ENCODE measurements at regions of chr17 and their contacts with region 1.

Region 1: DNA sequence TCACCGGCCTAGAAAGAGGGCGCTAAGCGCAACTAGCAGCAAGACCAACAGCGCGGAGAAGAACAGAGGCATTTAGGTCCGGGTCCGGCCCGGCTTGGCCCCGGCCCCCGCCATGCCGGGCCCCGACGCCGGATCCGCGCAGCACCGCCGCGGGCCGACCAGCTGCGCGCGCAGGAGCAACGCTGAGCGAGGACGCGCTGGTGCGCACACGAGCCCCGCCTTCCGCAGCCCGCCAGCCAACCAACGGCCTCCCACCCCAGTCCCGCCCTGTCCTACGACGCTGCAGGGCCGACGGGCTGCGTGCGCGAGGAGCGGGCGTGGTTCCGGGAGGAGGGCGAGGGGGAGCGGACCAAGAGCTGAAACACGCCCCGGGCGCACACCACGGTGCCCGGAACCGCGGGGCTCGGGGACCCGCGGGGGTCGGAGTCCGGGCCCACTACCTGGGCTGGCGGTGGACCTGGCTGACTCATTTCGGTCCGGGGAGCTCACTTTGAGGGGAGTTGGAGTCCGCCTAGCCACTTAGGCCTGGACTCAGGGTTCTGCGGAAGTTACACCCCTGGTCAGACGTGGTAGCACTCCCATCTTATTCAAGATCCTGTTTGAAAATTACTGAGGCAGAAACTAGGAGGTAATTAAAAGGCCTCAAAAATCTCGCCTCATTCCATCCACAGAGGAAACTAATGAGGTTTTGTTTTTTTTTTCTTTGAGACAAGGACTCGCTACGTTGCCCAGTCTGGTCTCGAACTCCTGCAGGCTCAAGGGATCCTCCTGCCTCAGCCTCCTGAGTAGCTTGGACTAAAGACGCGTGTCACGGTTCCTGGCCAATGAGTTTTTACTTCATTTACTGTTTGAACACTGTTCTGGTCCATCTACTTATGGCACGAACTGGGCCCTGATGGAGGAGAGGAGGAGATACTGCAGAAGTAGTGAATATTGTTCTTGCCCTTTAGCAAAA is at the start of gene BLTP2:
- DNase-seq: peak; percentile 85 to 93
- H3K4me3 ChIP-seq: peak within 1 kb of the TSS; percentile 91
- H3K27ac ChIP-seq: peak within 1 kb of the TSS; percentile 31; the same call in 1 of the 2 replicates
- H3K4me1 ChIP-seq: peaks cover 17% of the 10 kb centered on the region
- H3K27me3 ChIP-seq: no peaks in the 10 kb centered on the region
- CTCF ChIP-seq: no peak
- total RNA-seq, gene BLTP2: 161 and 204 TPM in 2 replicates

Region 2: DNA sequence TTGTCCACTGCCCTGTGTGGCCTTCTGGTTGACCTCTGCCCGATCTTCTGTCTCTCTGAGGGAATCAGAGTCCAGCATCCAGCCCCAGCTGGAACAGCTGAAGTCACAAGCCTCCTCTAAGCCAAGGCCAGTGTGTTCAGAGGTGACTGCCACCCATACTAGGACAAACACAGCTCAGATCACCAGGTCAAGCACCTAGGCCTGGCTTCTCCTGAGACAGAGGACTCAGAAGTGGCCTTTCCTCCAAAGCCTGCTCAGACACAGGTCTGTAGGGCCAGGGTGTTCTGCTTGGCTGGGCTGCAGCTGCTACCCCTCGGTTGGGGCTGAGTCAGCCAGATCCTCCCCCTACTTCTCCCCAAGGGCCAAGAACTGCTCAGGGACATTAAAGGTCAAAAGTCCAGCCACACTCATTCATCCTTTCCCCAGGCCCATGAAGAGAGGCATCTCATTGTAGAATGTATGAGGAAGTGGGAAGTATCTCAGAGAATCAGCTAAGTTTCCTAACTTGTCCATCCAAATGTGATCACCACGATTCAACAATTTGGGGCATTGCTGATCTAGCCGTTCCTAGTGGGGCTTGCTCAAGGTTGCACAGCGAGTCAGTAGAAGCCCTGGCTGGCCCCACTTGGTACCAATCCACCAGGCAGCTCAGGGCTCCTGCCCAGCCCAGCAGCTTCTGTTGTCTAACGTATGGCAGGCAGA is 246.8 kb before region 1 on chr17:
- CTCF ChIA-PET with region 1: no interaction called
- POLR2A ChIA-PET with region 1: no interaction called
- intact Hi-C with region 1: no loop called
- DNase-seq: no peak
- H3K4me3 ChIP-seq: no peak overlapping the region
- H3K27ac ChIP-seq: no peak overlapping the region
- H3K4me1 ChIP-seq: no peaks in the 10 kb centered on the region
- H3K27me3 ChIP-seq: no peaks in the 10 kb centered on the region
- CTCF ChIP-seq: no peak

Region 3: DNA sequence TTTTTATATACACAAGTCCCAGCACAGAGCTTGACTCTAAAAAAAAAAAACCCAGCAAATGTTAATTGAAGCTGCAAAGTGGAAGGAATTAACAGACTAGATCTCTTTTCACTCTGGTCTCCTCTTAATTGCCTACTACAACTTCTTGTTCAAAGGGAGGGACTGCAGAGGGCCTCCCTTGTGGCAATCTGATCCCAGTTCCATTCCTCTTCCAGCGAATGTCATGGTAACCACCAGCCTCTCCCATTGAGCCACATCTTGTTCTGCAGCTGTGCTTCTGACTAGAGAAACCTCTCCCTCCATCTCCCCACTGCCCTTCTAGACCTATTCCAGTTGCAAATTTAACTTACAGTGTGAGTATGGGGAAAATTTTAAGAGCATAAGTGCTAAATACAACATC is 22.6 kb after region 1 on chr17:
- CTCF ChIA-PET with region 1: no interaction called
- POLR2A ChIA-PET with region 1: interaction called, 12 read pairs
- intact Hi-C with region 1: loop called (anchors 2 kb)
- DNase-seq: no peak
- H3K4me3 ChIP-seq: no peak overlapping the region
- H3K27ac ChIP-seq: no peak overlapping the region
- H3K4me1 ChIP-seq: peaks cover 7% of the 10 kb centered on the region
- H3K27me3 ChIP-seq: no peaks in the 10 kb centered on the region
- CTCF ChIP-seq: no peak

Region 4: DNA sequence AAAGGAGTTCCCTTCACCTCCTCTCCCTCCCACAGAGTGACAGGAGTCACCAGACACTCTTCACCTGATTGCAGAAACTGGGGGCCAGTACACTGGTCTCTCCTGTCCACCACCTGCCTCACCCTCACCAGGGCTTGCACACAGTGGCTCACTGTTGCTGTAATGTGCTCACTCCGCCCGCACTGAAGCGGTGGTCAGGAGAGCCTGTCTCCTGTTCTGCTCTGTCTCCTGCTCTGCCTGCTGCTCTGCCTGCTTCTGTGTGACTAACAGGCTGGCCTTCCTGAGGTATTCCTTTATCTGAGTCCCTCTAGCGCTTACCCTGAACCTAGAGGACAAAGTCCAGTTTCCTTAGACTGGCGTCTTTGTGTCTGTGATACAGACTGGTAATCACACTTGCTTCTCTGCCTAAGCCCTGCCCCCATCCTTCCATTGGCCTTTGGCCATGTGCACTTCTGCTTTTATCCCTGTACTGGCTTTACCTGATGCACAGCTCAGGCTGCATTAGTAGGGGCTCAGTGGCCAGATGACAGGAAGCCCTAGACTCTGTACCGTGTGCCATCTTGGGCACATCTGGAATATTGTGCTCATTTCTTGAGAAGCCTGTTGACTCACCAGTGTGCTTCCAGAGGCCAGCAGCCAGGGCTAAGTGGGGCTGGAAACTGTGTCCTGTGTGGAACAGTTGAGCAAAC is 53.1 kb after region 1 on chr17:
- CTCF ChIA-PET with region 1: no interaction called
- POLR2A ChIA-PET with region 1: no interaction called
- intact Hi-C with region 1: no loop called
- DNase-seq: no peak
- H3K4me3 ChIP-seq: no peak overlapping the region
- H3K27ac ChIP-seq: no peak overlapping the region
- H3K4me1 ChIP-seq: no peaks in the 10 kb centered on the region
- H3K27me3 ChIP-seq: no peaks in the 10 kb centered on the region
- CTCF ChIP-seq: no peak

Region 5: DNA sequence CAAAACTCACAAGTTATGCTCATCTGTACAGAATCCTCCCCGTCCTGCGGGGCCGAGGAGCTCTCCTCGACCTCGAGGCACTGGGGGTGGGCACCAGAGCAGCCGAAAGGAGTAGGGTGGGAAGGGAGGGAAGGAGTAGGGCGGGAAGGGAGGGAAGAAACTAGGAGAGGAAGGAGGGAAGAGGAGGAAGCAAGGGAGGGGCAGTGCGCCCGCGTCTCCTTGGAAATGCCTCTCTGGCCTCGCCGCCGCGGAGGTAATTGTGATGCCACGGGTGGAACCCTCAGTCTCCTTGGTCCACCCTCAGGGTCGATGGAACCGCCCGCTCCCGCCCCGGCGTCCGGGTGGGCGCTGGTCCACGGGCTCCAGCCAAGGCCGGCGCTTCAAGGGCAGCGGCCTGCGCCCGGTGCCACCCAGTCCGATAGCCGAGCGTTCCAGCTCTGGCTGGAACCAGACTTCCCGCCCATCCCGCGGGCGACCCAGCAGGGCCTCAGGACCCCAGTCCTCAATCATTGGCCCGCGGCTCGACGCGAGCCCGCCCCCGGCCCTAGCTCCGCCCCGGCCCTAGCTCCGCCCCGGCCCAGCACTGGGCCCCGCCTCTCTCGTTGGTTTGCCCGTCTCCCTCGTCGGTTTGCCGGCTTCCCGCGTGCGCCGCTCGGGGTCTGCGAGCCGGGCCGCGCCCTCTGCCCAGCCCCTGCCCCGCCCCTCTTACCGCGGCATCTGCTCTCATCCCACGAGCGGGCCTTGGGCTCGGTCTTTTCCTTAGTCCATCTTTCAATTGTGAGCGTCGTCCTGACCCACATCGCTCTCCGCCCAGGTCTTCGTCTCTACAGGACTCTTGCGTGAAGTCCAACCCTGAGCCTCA is 65.8 kb after region 1 on chr17:
- CTCF ChIA-PET with region 1: interaction called, 7 read pairs
- POLR2A ChIA-PET with region 1: interaction called, 18 read pairs
- intact Hi-C with region 1: no loop called
- DNase-seq: peak; percentile 66 to 95
- H3K4me3 ChIP-seq: peak overlapping the region; percentile 82
- H3K27ac ChIP-seq: peak overlapping the region; percentile 17; the same call in 1 of the 2 replicates
- H3K4me1 ChIP-seq: peaks cover 14% of the 10 kb centered on the region
- H3K27me3 ChIP-seq: no peaks in the 10 kb centered on the region
- CTCF ChIP-seq: no peak

Region 6: DNA sequence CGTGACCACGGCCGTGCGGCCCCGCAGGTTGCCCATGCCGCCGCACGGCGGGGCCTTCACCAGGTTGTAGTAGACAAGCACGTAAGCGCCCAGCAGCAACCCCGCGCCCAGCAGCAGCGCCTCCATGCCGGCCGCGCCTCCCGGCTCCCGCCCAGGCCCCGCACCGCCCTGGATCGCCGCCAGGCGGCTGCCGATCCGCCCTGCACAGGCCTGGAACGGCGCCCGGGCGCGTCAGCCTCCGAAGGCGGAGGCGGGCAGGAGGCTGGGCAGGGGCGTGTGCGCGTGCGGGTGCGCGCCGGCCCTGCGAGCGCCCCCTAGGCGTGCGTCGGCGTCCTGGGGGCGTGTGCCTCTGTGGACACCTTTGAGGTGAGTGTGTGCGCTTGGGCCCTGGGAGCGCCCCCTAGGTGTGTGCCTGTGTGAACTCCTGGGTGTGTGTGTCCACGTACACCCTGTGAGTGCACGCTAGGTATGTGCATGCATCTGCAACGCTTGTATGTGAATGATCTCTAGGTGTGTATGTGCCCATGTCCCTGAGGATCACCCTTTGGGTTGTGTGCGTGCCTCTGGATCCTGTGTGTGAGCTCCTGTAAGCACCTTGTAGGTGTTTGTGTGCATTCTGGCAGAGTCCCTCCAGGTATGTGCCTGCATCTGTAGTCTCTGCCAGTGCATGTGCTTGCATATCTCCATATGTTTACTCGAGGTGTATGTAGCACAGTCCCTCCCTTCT is 257.7 kb after region 1 on chr17 and contains the start of gene DHRS13:
- CTCF ChIA-PET with region 1: no interaction called
- POLR2A ChIA-PET with region 1: no interaction called
- intact Hi-C with region 1: loop called (anchors 5 kb)
- DNase-seq: peak; percentile 85 to 94
- H3K4me3 ChIP-seq: peak within 1 kb of the TSS; percentile 73
- H3K27ac ChIP-seq: no peak within 1 kb of the TSS
- H3K4me1 ChIP-seq: peaks cover 15% of the 10 kb centered on the region
- H3K27me3 ChIP-seq: no peaks in the 10 kb centered on the region
- CTCF ChIP-seq: peak; percentile 88
- total RNA-seq, gene DHRS13: 15.8 and 17.5 TPM in 2 replicates

Measured in PC-9 (cell line).